ENCODE measurements at regions of chr17 and their contacts with region 1.

Region 1: DNA sequence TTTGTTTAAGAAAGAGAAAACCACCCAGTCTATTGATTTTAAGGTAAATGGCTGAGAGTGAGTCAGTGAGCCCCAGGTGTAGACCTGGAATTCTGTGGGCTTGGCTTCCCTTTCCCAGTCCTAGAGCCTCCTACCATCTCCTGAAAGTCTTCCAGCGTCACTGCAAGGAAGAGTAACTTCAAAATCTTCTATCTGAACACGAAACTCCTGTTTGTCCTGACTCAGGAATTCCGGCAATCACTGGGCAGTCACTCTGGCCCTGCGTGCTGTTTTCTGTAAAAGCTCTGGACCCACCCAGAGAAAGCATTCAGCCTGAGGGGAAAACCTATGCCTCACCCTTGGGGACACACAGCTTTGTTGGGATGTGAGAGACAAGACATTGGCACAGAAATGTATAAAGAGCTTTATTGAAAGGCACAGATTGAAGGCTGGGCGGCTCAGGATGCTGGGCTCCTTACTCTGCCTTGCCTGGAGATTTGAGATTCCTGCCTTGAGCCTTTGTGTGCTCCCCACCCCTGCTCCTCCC is 15.9 kb downstream of the MINK1 start:
- DNase-seq: peak; percentile 46 to 65
- H3K4me3 ChIP-seq: no peak overlapping the region
- H3K4me3 Mint-ChIP-seq: peak overlapping the region; percentile 28
- H3K27ac Mint-ChIP-seq: peak overlapping the region; percentile 33
- H3K4me1 ChIP-seq: peaks cover 15% of the 10 kb centered on the region
- H3K4me1 Mint-ChIP-seq: peaks cover 20% of the 10 kb centered on the region
- H3K27me3 ChIP-seq: no peaks in the 10 kb centered on the region
- H3K27me3 Mint-ChIP-seq: no peaks in the 10 kb centered on the region
- CTCF ChIP-seq: no peak

Region 2: GRCh38 chr17:4881761-4882555 is 32.9 kb after region 1 on chr17:
- CTCF ChIA-PET with region 1: no interaction called
- POLR2A ChIA-PET with region 1: no interaction called
- intact Hi-C with region 1: loop called (anchors 1 kb)
- DNase-seq: peak; percentile 60 to 71
- H3K4me3 ChIP-seq: no peak overlapping the region
- H3K4me3 Mint-ChIP-seq: no peak overlapping the region
- H3K27ac Mint-ChIP-seq: no peak overlapping the region
- H3K4me1 ChIP-seq: no peaks in the 10 kb centered on the region
- H3K4me1 Mint-ChIP-seq: no peaks in the 10 kb centered on the region
- H3K27me3 ChIP-seq: no peaks in the 10 kb centered on the region
- H3K27me3 Mint-ChIP-seq: no peaks in the 10 kb centered on the region
- CTCF ChIP-seq: peak; percentile 52 to 68

Measured in Caco-2 (cell line).